PC-3 (cell line): ENCODE measurements at regions of chr5 and their contacts with region 1.

Region 1: GRCh38 chr5:13034048-13034447 is 910.4 kb downstream of the DNAH5 start:
- DNase-seq: peak; percentile 81
- ATAC-seq: peak; percentile 98
- H3K4me3 ChIP-seq: no peak overlapping the region
- H3K27ac ChIP-seq: 0 out of 2 replicates have a peak overlapping the region, but pooled peaks have one; percentile 5
- H3K4me1 ChIP-seq: peaks cover 5% of the 10 kb centered on the region
- H3K27me3 ChIP-seq: no peaks in the 10 kb centered on the region
- CTCF ChIP-seq: no peak

Region 2: DNA sequence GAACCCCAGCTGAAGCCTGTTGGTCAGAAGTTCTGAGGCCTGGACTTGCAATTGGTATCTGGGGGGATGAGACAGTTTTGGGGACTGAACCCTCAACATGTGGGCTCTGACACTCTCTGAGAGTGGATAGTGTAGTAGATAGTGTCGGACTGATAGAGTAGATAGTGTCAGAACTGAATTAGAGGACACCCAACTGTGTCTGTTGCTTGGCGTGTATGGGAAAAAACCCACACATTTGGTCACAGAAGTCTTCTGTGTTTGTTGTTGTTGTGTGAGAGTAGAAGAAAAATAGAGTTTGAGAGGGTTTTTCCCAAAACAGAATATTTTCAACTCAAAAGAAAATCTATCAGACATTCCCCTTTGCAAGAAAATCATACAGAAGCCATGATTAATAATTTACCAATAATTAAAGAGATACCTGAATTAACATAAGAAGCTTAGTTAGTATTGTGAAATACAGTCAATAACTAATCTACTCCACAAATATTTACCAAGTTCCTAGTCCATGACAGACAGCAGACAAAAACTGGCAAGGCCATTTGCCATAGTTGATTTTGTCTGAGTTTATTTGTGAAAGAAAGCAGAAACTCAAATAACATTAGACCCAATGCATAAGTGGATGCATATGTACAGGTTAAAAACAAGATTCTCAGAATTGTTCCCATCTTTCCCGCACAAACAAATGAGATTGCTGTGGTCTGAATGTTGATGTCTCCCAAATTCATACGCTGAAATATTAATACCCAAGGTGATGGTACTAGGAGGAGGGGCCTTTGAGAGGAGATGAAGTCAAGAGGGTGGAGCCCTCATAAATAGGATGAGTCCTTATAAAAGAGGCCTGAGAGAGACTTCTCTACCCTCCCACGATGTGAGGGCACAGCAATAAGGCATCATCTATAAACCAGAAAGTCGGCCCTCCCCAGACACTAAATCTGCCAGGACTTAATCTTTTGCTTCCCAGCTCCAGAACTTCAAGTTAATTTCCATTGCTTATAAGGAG is 1300.6 kb before region 1 on chr5:
- CTCF ChIA-PET with region 1: no interaction called
- POLR2A ChIA-PET with region 1: no interaction called
- intact Hi-C with region 1: no loop called
- DNase-seq: peak; percentile 23
- ATAC-seq: peak; percentile 29; the same call in 1 of the 2 replicates
- H3K4me3 ChIP-seq: no peak overlapping the region
- H3K27ac ChIP-seq: no peak overlapping the region
- H3K4me1 ChIP-seq: peaks cover 10% of the 10 kb centered on the region
- H3K27me3 ChIP-seq: no peaks in the 10 kb centered on the region
- CTCF ChIP-seq: no peak

Region 3: GRCh38 chr5:13566871-13567339 is 532.9 kb after region 1 on chr5:
- CTCF ChIA-PET with region 1: no interaction called
- POLR2A ChIA-PET with region 1: no interaction called
- intact Hi-C with region 1: loop called (anchors 10 kb)
- DNase-seq: peak; percentile 99
- ATAC-seq: peak; percentile 68
- H3K4me3 ChIP-seq: no peak overlapping the region
- H3K27ac ChIP-seq: peak overlapping the region; percentile 95
- H3K4me1 ChIP-seq: peaks cover 32% of the 10 kb centered on the region
- H3K27me3 ChIP-seq: no peaks in the 10 kb centered on the region
- CTCF ChIP-seq: no peak